Activated CD4-positive, alpha-beta T cell treated with anti-CD3 and anti-CD28 coated beads for 36 hours (primary cell): ENCODE measurements at regions of chr2 and their contacts with region 1.

Region 1: DNA sequence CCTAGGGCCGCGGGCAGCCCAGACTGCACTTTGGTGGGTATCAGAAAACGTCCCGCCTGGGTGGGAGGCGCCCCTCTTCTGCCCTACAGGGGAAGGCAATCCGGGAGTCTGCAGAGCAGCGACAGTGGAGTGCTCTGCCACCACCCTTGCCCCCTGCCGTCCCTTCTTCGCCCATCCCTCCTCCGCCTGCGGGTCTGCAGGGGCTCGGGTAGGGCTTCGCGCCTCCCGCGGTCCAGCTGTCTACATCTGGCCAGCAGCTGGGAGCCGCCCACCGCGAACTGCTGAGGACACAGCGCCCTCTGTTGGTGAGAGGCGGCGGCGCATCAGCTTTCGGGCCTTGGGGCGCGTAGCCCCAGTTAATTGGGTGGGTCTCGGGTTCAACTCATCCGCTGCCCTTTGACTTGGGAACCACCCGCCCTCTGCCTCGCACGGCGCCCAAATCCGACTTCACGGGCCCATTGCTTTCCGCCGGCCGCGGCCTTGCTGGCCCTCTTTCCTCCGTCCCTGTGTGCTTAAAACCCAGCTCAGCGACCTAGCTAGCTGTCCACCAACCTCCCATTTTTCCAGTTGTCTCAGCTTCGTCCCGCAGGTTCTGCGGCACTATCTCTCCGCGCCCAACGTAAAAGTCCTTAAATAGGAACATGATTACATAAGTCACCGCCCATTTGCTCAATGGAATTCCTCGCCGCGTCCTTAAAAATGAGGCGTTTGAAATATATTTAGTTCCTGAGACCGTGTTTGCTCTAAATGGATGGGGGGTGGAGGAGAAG is 17.6 kb downstream of the WNT10A start:
- DNase-seq: peak; percentile 91
- ATAC-seq: peak; percentile 15
- H3K4me3 Mint-ChIP-seq: peak overlapping the region; percentile 49
- H3K27ac Mint-ChIP-seq: no peak overlapping the region
- H3K4me1 Mint-ChIP-seq: peaks cover 42% of the 10 kb centered on the region
- H3K27me3 Mint-ChIP-seq: peaks cover 30% of the 10 kb centered on the region

Region 2: GRCh38 chr2:218395797-218396687 is 502.3 kb before region 1 on chr2:
- CTCF ChIA-PET with region 1: no interaction called
- POLR2A ChIA-PET with region 1: no interaction called
- intact Hi-C with region 1: loop called in 1 of 2 experiments (anchors 2 kb)
- DNase-seq: peak; percentile 97
- ATAC-seq: peak; percentile 68
- H3K4me3 Mint-ChIP-seq: peak overlapping the region; percentile 85
- H3K27ac Mint-ChIP-seq: peak overlapping the region; percentile 92
- H3K4me1 Mint-ChIP-seq: peaks cover 29% of the 10 kb centered on the region
- H3K27me3 Mint-ChIP-seq: peaks cover 6% of the 10 kb centered on the region

Region 3: GRCh38 chr2:218852911-218853667 is 45.2 kb before region 1 on chr2:
- CTCF ChIA-PET with region 1: interaction called, 42 read pairs
- POLR2A ChIA-PET with region 1: no interaction called
- intact Hi-C with region 1: loop called (anchors 1 kb)
- DNase-seq: peak; percentile 81
- ATAC-seq: peak; percentile 84
- H3K4me3 Mint-ChIP-seq: no peak overlapping the region
- H3K27ac Mint-ChIP-seq: no peak overlapping the region
- H3K4me1 Mint-ChIP-seq: no peaks in the 10 kb centered on the region
- H3K27me3 Mint-ChIP-seq: peaks cover 54% of the 10 kb centered on the region

Region 4: DNA sequence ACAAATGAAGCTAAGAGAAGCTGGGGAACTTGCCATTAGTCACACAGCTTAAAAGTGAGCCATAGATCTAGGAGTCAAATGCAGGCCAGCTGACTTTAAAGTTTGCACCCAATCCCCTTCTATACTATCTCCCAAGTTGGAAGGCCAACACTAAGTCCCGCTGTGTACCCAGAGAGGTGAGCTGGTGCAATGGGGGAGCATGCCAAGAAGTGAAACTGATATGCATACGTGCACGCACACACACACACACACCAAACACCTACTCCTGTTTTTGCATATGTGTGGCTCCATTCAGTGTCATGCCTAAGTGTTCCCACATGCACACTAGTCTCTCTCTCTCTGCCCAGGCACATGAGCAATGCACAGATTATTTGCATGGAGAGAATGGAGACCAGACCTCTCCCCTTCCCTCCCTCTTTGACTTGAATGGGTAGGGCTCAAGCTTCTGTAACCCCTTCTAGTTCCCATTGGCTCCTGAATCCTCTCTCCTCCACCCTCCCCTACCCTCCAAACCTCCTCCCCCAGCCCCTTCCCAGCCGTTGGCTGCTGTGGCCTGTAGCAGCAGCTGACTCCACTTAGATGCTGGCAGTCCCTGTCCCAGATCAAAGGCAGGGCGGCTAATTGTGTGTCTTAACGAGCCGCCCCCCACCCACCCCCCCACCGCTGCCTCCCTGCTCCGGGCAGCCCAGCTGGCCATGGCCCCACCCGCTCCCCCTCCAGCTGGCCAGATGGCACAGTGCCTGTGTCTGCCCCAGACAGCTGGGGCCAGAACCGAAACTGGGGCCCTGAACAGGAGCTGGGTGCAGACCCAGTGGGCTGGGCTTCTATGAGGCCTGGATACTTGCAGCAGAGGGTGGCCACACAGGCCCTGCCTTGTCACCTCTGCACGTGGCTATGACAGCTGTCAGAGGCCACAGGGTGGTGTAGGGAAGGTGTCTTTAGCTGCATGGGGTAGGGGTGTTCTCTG is 12.0 kb before region 1 on chr2:
- CTCF ChIA-PET with region 1: interaction called, 620 read pairs
- POLR2A ChIA-PET with region 1: interaction called, 9 read pairs
- intact Hi-C with region 1: no loop called
- DNase-seq: no peak
- ATAC-seq: peak; percentile 24
- H3K4me3 Mint-ChIP-seq: no peak overlapping the region
- H3K27ac Mint-ChIP-seq: no peak overlapping the region
- H3K4me1 Mint-ChIP-seq: peaks cover 24% of the 10 kb centered on the region
- H3K27me3 Mint-ChIP-seq: peaks cover 17% of the 10 kb centered on the region

Region 5: GRCh38 chr2:219206442-219207253 is 308.4 kb after region 1 on chr2 and contains the start of gene ZFAND2B:
- CTCF ChIA-PET with region 1: interaction called, 3 read pairs
- POLR2A ChIA-PET with region 1: no interaction called
- intact Hi-C with region 1: loop called in 1 of 2 experiments (anchors 2 kb)
- DNase-seq: peak; percentile 98
- ATAC-seq: peak; percentile 96
- H3K4me3 Mint-ChIP-seq: peak within 1 kb of the TSS; percentile 86
- H3K27ac Mint-ChIP-seq: peak within 1 kb of the TSS; percentile 94
- H3K4me1 Mint-ChIP-seq: peaks cover 34% of the 10 kb centered on the region
- H3K27me3 Mint-ChIP-seq: no peaks in the 10 kb centered on the region
- total RNA-seq, gene ZFAND2B: 21.5 to 27.6 TPM

Region 6: DNA sequence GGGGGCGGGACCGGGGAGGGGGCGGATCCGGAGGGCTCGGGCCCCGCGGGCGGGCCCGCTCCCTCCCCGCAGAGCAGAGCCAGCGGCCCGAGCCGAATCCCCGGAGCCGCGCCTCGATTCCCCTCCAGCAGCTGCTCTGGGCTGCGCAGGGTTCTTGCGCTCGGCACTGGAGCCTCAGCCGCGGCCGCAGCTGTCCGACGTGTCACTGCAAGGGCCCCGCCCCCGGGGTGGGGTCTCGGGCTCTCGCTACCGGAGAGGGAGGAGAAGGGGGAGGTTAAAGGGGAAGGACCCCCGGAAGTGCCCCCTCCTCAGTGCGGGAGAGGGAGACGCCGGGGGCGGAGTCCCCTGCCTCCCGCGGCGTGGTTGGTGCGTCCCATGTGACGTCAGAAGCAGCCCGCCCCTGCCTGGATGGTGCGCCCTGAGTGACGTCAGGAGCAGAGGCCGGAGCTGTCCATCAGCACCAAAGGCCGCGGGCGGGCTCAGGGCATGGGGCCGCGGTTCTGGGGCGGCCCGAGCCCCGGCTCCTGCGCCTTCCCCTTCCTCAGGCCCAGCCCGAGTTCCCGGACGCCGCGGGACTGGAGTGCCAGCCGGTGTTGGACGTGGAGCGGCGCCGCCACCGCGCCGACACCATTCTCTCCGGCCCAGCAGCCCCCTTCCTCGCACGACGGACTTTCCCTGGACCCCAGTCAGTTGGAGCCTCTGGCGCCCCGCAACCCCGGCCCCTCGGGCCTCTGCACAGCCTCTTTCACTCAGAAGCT is 645.5 kb after region 1 on chr2 and contains the starts of genes CHPF and TMEM198:
- CTCF ChIA-PET with region 1: no interaction called
- POLR2A ChIA-PET with region 1: no interaction called
- intact Hi-C with region 1: loop called in 1 of 2 experiments (anchors 5 kb)
- DNase-seq: peak; percentile 98
- ATAC-seq: peak; percentile 85
- H3K4me3 Mint-ChIP-seq: peak within 1 kb of the TSS; percentile 87
- H3K27ac Mint-ChIP-seq: peak within 1 kb of the TSS; percentile 66
- H3K4me1 Mint-ChIP-seq: peaks cover 22% of the 10 kb centered on the region
- H3K27me3 Mint-ChIP-seq: no peaks in the 10 kb centered on the region
- total RNA-seq, gene CHPF: 14.1 to 17.1 TPM
- total RNA-seq, gene TMEM198: 2.4 to 2.7 TPM